Ovary (tissue), 10 donors: ENCODE measurements at regions of chr6 and their contacts with region 1.

Region 1: DNA sequence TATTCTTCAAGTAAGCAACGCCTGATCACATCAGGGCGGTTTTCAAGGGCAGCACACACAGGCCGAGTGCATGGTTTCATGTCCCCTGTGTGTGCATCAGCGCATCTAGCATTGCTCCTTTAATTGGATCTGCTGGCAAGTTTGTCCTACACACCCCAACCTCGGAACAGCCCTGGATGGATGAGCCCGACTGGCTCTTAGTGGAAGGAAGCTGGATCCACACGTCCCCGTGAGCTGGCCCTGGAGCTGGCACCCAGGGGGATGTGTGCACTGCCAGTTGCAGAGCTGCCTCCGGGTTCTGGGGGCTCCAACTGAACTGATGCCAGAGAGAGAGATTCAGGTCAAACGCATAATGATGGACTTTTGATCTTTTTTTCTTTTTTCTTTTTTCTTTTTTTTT is 39.2 kb upstream of the QKI start:
- DNase-seq: no peak
- H3K4me3 ChIP-seq: no peak overlapping the region
- H3K27ac ChIP-seq: no peak overlapping the region
- H3K4me1 ChIP-seq: no peaks in the 10 kb centered on the region
- H3K27me3 ChIP-seq: no peaks in the 10 kb centered on the region
- CTCF ChIP-seq: no peak
- EP300 ChIP-seq: no peak
- POLR2A ChIP-seq: no peak

Region 2: GRCh38 chr6:163634194-163635171 is 259.1 kb after region 1 on chr6:
- intact Hi-C with region 1: no loop called
- DNase-seq: no peak
- H3K4me3 ChIP-seq: no peak overlapping the region
- H3K27ac ChIP-seq: no peak overlapping the region
- H3K4me1 ChIP-seq: no peaks in the 10 kb centered on the region
- H3K27me3 ChIP-seq: no peaks in the 10 kb centered on the region
- CTCF ChIP-seq: no peak
- EP300 ChIP-seq: no peak
- POLR2A ChIP-seq: no peak

Region 3: GRCh38 chr6:163844761-163845160 is 469.4 kb after region 1 on chr6:
- intact Hi-C with region 1: loop called in 1 of 4 experiments (anchors 5 kb)
- DNase-seq: no peak
- H3K4me3 ChIP-seq: no peak overlapping the region
- H3K27ac ChIP-seq: no peak overlapping the region
- H3K4me1 ChIP-seq: no peaks in the 10 kb centered on the region
- H3K27me3 ChIP-seq: no peaks in the 10 kb centered on the region
- CTCF ChIP-seq: no peak
- EP300 ChIP-seq: no peak
- POLR2A ChIP-seq: no peak